ENCODE measurements at regions of chr17 and their contacts with region 1.

Region 1: DNA sequence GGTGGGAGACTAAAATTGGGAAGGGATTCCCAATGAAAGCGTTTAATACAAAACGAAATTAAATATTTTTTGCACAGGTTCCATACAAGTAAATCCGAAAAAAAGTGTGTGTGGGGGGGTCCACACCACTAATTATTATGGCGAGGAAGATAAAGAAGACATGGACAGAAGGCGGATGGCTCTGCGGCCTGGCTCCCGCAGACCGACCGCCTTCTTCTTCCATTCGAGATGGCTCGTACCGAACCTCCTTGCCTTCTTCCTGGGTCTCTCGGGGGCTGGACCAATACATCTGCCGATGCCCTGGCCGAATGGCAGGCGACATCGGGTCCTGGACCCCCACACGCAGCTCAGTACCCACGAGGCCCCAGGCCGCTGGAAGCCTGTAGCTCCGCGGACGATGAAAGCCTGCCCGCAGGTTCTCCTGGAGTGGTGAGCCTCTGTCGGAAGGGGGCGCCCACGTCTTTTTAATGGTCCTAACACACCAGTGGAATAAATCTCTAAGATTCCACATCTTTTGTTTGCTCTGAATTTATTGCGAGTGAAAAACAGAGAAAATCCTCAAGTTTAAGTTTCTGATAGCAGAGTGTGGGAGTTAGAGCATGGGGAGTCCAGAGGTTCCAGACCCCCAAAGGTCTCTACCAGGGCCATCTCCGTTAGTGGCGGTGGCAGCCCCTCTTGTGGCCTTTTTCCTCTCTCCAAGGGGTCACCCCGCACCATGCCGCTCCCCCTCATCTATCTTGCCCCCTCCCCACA is 1.4 kb downstream of the PRAC2 start:
- DNase-seq: peak; percentile 68 to 77
- ATAC-seq: peak; percentile 67 to 85
- H3K4me3 ChIP-seq: no peak overlapping the region
- H3K27ac ChIP-seq: 0 out of 6 replicates have a peak overlapping the region, but pooled peaks of 1 of the 2 experiments have one; percentile 13
- H3K4me1 ChIP-seq: peaks cover 13% of the 10 kb centered on the region
- CTCF ChIP-seq: peak; percentile 94
- EP300 ChIP-seq: no peak
- POLR2A ChIP-seq: no peak
- RAD21 ChIP-seq: peak; percentile 98 to 99

Region 2: GRCh38 chr17:48593840-48594537 is 130.4 kb before region 1 on chr17:
- CTCF ChIA-PET with region 1: no interaction called
- POLR2A ChIA-PET with region 1: no interaction called
- DNase-seq: peak; percentile 81 to 94
- ATAC-seq: peak; percentile 74 to 92
- H3K4me3 ChIP-seq: peak overlapping the region; percentile 22; the same call in 2 of the 3 replicates
- H3K27ac ChIP-seq: peak overlapping the region in 1 of 2 experiments; percentile 60; a peak in 4 of 6 replicates
- H3K4me1 ChIP-seq: peaks cover 5% of the 10 kb centered on the region
- CTCF ChIP-seq: peak; percentile 99
- EP300 ChIP-seq: no peak
- POLR2A ChIP-seq: no peak
- RAD21 ChIP-seq: peak; percentile 91 to 94

Region 3: GRCh38 chr17:48738803-48739526 is 14.5 kb after region 1 on chr17:
- CTCF ChIA-PET with region 1: interaction called, 164 read pairs
- POLR2A ChIA-PET with region 1: no interaction called
- DNase-seq: no peak
- ATAC-seq: no peak
- H3K4me3 ChIP-seq: no peak overlapping the region
- H3K27ac ChIP-seq: no peak overlapping the region
- H3K4me1 ChIP-seq: no peaks in the 10 kb centered on the region
- CTCF ChIP-seq: no peak
- EP300 ChIP-seq: no peak
- POLR2A ChIP-seq: no peak
- RAD21 ChIP-seq: no peak

Region 4: GRCh38 chr17:48756830-48757251 is 32.4 kb after region 1 on chr17:
- CTCF ChIA-PET with region 1: interaction called, 171 read pairs
- POLR2A ChIA-PET with region 1: no interaction called
- DNase-seq: no peak
- ATAC-seq: no peak
- H3K4me3 ChIP-seq: no peak overlapping the region
- H3K27ac ChIP-seq: no peak overlapping the region
- H3K4me1 ChIP-seq: peaks cover 40% of the 10 kb centered on the region
- CTCF ChIP-seq: no peak
- EP300 ChIP-seq: no peak
- POLR2A ChIP-seq: no peak
- RAD21 ChIP-seq: no peak

Region 5: GRCh38 chr17:48791128-48792032 is 67.0 kb after region 1 on chr17:
- CTCF ChIA-PET with region 1: interaction called, 852 read pairs
- POLR2A ChIA-PET with region 1: interaction called, 11 read pairs
- DNase-seq: peak; percentile 92 to 94
- ATAC-seq: peak; percentile 77 to 89
- H3K4me3 ChIP-seq: no peak overlapping the region
- H3K27ac ChIP-seq: peak overlapping the region; percentile 68
- H3K4me1 ChIP-seq: peaks cover 49% of the 10 kb centered on the region
- CTCF ChIP-seq: peak; percentile 96
- EP300 ChIP-seq: no peak
- POLR2A ChIP-seq: no peak
- RAD21 ChIP-seq: peak; percentile 96 to 98

Region 6: DNA sequence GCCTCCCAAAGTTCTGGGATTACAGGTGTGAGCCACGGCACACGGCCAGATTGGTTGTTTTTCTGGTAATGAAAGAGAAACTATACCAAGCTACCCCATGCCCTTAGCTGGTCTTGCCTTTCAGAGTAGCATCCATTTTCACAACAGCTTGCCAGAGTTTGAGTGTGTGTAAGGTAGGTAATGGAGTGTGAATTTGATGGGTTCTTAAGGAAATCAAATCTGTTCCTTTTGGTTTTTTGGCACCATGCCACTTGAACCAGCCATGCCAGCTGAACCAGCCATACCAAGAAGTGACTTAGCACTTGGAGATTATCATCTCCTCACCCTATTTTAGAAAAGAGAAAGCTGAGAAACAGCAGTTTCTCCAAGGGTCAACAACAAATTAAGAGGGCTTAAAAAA is 111.6 kb after region 1 on chr17:
- CTCF ChIA-PET with region 1: interaction called, 14 read pairs
- POLR2A ChIA-PET with region 1: no interaction called
- DNase-seq: no peak
- ATAC-seq: no peak
- H3K4me3 ChIP-seq: no peak overlapping the region
- H3K27ac ChIP-seq: no peak overlapping the region
- H3K4me1 ChIP-seq: peaks cover 25% of the 10 kb centered on the region; the same call in 2 of the 3 replicates
- CTCF ChIP-seq: no peak
- EP300 ChIP-seq: no peak
- POLR2A ChIP-seq: no peak
- RAD21 ChIP-seq: no peak

Region 7: GRCh38 chr17:48871551-48872351 is 147.3 kb after region 1 on chr17:
- CTCF ChIA-PET with region 1: interaction called, 620 read pairs
- POLR2A ChIA-PET with region 1: no interaction called
- DNase-seq: peak; percentile 85 to 93
- ATAC-seq: peak; percentile 88 to 94
- H3K4me3 ChIP-seq: no peak overlapping the region
- H3K27ac ChIP-seq: peak overlapping the region; percentile 90 to 94
- H3K4me1 ChIP-seq: peaks cover 58% of the 10 kb centered on the region
- CTCF ChIP-seq: no peak
- EP300 ChIP-seq: no peak; a peak in 1 of 5 replicates
- POLR2A ChIP-seq: no peak
- RAD21 ChIP-seq: peak; percentile 28 to 30; a peak in 2 of 5 replicates

Measured in A549 (cell line).